HCT116 (cell line): ENCODE measurements at regions of chr2 and their contacts with region 1.

Region 1: DNA sequence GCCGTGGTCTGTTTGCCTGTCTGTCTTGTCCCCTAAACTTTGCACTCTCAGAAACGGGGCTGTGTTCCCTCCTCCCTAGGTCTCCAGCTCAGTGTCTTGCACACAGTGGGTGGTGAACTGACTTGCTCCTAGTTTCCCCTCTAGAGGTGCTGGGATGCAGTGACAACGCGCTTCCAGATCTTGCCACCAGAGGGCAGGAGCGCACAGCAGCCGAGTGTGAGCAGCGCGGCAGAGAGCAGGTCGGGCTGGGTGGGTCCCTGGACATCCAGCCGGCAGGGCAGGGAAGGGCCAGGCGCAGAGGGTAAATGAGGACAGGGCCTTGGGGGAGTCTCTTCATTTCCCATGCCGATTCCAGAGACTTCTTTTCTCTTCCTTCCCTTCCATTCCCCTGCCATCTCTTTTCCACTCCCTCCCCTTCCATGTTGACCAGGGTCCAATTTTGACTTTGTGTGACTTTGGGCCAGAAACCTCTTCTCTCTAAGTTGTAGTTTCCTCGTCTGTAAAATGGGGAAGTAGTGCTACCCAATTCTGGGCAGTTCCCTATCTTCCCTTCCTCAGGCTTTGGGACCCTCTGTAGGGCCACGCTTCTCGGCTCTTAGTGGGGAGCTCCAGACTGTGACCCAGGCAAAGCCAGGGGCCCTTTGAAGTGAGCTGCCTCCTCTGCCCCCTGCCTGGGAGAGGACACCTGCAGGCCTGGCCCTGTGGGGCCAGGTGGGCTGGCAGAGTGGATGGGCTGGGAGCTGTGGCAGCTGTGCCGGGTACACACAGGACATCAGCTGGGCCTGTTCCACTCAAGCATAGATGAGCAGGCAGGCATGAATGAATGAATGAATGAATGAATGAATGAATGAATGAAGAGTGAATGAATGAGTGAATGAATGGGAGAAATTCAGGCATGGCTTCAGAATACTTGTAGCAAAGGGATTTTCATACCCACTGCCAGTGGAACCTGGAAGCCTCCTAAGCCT is 43.3 kb upstream of the TAF1B start:
- DNase-seq: peak; percentile 72
- ATAC-seq: peak; percentile 84
- H3K4me3 ChIP-seq: no peak overlapping the region
- H3K27ac ChIP-seq: peak overlapping the region; percentile 75; the same call in 1 of the 2 replicates
- H3K4me1 ChIP-seq: peaks cover 31 to 48% of the 10 kb centered on the region in 2 experiments
- H3K27me3 ChIP-seq: no peaks in the 10 kb centered on the region
- CTCF ChIP-seq: peak in 2 of 3 experiments; percentile 97 to 99; a peak in 4 of 6 replicates
- POLR2A ChIP-seq: no peak
- RAD21 ChIP-seq: no peak

Region 2: GRCh38 chr2:9613291-9613690 is 186.7 kb before region 1 on chr2:
- CTCF ChIA-PET with region 1: no interaction called
- POLR2A ChIA-PET with region 1: no interaction called
- RAD21 ChIA-PET with region 1: no interaction called
- intact Hi-C with region 1: no loop called
- DNase-seq: no peak
- ATAC-seq: no peak
- H3K4me3 ChIP-seq: no peak overlapping the region
- H3K27ac ChIP-seq: no peak overlapping the region
- H3K4me1 ChIP-seq: peaks cover 13 to 47% of the 10 kb centered on the region in 2 experiments
- H3K27me3 ChIP-seq: no peaks in the 10 kb centered on the region
- CTCF ChIP-seq: no peak
- POLR2A ChIP-seq: no peak
- RAD21 ChIP-seq: no peak

Region 3: DNA sequence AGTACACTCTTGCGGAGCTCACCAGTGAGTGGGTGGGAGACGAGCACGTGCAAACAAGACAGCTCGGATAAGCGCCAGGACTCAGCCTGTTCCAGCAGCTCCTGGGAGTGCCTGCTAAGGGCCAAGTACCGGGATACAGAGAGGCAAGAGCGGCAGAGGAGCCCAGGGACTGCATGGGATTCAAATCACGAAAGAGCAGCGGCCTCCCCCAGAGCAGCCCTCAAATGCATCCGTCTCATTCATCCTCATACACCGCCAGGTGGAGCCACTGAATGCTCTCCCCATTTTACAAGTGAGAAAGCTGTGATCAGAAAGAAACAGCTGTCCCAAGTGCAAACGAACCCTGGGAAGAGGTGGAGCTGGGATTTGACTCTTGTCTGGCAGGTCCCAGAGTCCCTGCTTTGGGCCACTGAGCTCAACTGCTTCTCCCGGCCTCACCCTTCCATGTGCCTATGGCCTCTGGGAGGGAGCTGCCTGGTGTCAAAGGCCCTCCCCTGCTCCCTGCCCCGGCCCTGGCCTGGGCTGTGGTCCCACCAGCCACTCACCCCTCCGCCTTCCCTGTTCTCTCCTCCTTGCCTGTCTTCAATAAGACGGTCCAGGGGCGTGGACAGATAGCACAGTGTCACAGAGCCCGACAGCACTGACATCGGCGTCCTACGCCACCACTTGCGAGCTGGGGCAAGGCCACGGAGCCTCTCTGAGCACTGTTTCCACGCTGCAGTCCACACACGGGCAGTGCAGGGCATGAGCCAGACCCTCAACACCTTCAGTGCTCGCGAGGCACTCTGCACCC is 29.4 kb before region 1 on chr2:
- CTCF ChIA-PET with region 1: interaction called, 26 read pairs
- POLR2A ChIA-PET with region 1: no interaction called
- RAD21 ChIA-PET with region 1: no interaction called
- intact Hi-C with region 1: no loop called
- DNase-seq: peak; percentile 42
- ATAC-seq: peak; percentile 87
- H3K4me3 ChIP-seq: no peak overlapping the region
- H3K27ac ChIP-seq: no peak overlapping the region; the same call in 1 of the 2 replicates
- H3K4me1 ChIP-seq: peaks cover 17 to 29% of the 10 kb centered on the region in 2 experiments; a peak in 3 of 4 replicates
- H3K27me3 ChIP-seq: no peaks in the 10 kb centered on the region
- CTCF ChIP-seq: peak; percentile 69 to 80 (median 73)
- POLR2A ChIP-seq: no peak
- RAD21 ChIP-seq: peak; percentile 74